ENCODE measurements at regions of chr10 and their contacts with region 1.

Region 1: DNA sequence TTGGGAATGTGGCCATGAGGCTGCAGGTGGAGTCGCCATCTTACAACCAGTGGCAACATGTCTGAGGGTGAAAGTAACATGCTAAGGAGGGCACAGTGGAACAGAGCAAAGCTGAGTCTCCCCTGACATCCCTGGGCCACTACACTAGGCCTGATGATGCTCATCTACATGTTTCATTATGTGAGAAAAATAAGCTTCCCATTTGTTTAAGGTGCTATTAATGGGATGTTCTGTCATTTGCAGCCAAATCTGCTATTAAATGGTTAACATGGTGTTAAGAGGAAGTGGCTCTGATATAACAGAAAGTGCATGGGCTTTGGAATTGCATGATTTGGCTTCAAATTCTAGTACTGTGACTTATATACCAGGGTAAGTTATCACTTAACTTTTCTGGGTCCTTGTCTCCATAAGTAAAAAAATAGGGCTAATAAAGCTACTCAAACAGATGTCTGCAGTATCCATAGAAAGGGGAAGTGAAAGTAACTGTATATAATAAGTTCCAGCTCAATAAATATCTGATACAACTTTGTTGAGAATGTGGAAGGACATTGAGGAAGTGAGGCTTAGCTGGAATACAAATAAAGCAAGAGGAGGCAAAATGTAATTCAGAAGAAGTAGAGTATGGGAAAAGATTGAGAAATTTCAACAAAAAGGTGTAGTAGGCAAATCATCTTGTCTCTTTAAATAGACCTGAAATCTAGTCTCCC is 158.9 kb downstream of the RTKN2 start:
- H3K4me3 Mint-ChIP-seq: no peak overlapping the region
- H3K27ac Mint-ChIP-seq: peak overlapping the region; percentile 91
- H3K4me1 Mint-ChIP-seq: peaks cover 67% of the 10 kb centered on the region
- H3K27me3 Mint-ChIP-seq: no peaks in the 10 kb centered on the region

Region 2: GRCh38 chr10:61910894-61911293 is 198.8 kb before region 1 on chr10:
- intact Hi-C with region 1: no loop called
- H3K4me3 Mint-ChIP-seq: no peak overlapping the region
- H3K27ac Mint-ChIP-seq: no peak overlapping the region
- H3K4me1 Mint-ChIP-seq: no peaks in the 10 kb centered on the region
- H3K27me3 Mint-ChIP-seq: no peaks in the 10 kb centered on the region

Region 3: DNA sequence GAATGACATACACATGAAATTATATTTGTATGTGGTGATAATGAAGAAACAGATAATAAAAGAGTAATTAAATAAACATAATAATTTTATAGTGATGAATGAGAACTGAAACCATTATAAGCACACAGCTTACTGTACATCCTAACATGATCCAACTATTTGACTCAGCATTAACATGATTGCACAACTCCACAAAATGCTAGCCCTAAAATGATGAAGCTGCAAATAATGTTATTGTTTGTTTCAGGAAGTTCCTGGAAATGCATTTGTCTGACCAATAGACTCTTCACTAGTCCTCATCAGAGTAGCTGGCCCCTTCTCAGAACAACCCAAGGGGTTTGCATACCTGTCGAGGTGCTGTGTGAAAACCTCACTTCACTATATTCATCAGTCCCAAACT is 43.5 kb after region 1 on chr10:
- intact Hi-C with region 1: loop called (anchors 5 kb)
- H3K4me3 Mint-ChIP-seq: no peak overlapping the region
- H3K27ac Mint-ChIP-seq: peak overlapping the region; percentile 88
- H3K4me1 Mint-ChIP-seq: peaks cover 47% of the 10 kb centered on the region
- H3K27me3 Mint-ChIP-seq: no peaks in the 10 kb centered on the region